K562 (cell line): ENCODE measurements at regions of chr17 and their contacts with region 1.

Region 1: GRCh38 chr17:77002103-77003045 is 134.2 kb downstream of the MGAT5B start:
- DNase-seq: no peak
- ATAC-seq: no peak
- H3K4me3 ChIP-seq: no peak overlapping the region
- H3K27ac ChIP-seq: no peak overlapping the region
- H3K4me1 ChIP-seq: no peaks in the 10 kb centered on the region
- H3K27me3 ChIP-seq: peaks cover 20 to 64% of the 10 kb centered on the region in 2 experiments; a peak in 4 of 5 replicates
- CTCF ChIP-seq: no peak
- EP300 ChIP-seq: no peak
- POLR2A ChIP-seq: no peak
- RAD21 ChIP-seq: no peak

Region 2: DNA sequence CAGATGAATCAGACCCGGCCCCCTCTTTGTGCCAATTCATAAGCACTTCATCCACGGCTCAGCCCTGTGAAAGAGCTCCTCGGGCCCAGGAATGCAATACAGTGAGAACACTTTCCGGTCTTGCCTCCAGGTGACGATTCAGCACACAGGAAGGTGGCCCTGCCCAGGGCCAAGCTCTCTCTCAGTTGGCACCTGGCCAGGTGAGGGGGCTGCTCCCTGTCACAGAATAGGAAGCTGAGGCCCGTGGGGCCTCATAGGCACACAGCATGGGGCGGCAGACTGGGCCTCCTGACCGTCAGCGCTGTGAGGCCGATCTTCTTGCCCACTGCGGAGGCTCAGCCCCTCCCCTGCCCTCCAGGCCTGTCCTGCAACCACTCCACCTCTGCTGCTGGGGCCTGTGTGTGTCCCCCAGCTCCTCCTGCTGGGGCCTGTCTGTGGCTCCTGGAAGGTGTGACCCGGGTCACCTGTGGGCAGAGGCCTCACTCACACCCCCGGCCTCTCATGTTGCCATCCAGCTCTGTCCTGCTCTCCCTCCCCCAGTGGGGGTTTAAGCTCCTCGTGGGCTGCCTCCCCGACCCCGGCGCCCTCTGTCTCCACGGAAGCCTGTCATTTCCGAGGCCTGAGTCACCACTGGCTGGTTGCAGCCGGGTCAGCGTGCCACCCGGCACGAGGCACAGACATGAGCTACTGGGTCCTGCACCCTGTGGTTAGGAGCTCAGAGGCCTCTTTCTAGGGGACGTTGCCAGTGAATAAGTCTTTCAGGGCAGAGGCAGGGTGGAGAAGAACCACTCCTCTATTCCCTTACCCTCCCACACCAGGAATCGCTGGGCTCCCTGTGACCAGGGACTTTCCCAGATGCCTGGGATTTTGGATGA is 252.8 kb after region 1 on chr17:
- CTCF ChIA-PET with region 1: no interaction called
- POLR2A ChIA-PET with region 1: no interaction called
- in situ Hi-C with region 1: loop called (anchors 10 kb)
- intact Hi-C with region 1: no loop called
- DNase-seq: peak in 1 of 4 experiments; percentile 42
- ATAC-seq: no peak
- H3K4me3 ChIP-seq: no peak overlapping the region
- H3K27ac ChIP-seq: no peak overlapping the region
- H3K4me1 ChIP-seq: peaks cover 0 to 16% of the 10 kb centered on the region in 2 experiments; a peak in 2 of 5 replicates
- H3K27me3 ChIP-seq: peaks cover 36 to 68% of the 10 kb centered on the region in 2 experiments
- CTCF ChIP-seq: no peak
- EP300 ChIP-seq: no peak
- POLR2A ChIP-seq: no peak
- RAD21 ChIP-seq: no peak